CD4-positive, alpha-beta memory T cell (primary cell): ENCODE measurements at regions of chr1 and their contacts with region 1.

Region 1: GRCh38 chr1:21255278-21255942 is 34.9 kb downstream of the ECE1 start:
- DNase-seq: peak; percentile 73 to 82 (median 77)
- H3K4me3 ChIP-seq: no peak overlapping the region
- H3K4me3 Mint-ChIP-seq: no peak overlapping the region
- H3K27ac ChIP-seq: no peak overlapping the region
- H3K27ac Mint-ChIP-seq: peak overlapping the region in 5 of 7 donors; percentile 54 to 91 (median 70)
- H3K4me1 ChIP-seq: peaks cover 25% of the 10 kb centered on the region
- H3K4me1 Mint-ChIP-seq: peaks cover 20 to 40% (median 32%) of the 10 kb centered on the region in 4 donors
- H3K27me3 ChIP-seq: no peaks in the 10 kb centered on the region
- H3K27me3 Mint-ChIP-seq: no peaks in the 10 kb centered on the region

Region 2: GRCh38 chr1:20999525-21000244 is 255.7 kb before region 1 on chr1:
- CTCF ChIA-PET with region 1: no interaction called
- POLR2A ChIA-PET with region 1: no interaction called
- intact Hi-C with region 1: no loop called
- DNase-seq: no peak
- H3K4me3 ChIP-seq: no peak overlapping the region
- H3K4me3 Mint-ChIP-seq: no peak overlapping the region
- H3K27ac ChIP-seq: no peak overlapping the region
- H3K27ac Mint-ChIP-seq: no peak overlapping the region
- H3K4me1 ChIP-seq: no peaks in the 10 kb centered on the region
- H3K4me1 Mint-ChIP-seq: peaks cover 0 to 1% (median 0%) of the 10 kb centered on the region in 4 donors
- H3K27me3 ChIP-seq: no peaks in the 10 kb centered on the region
- H3K27me3 Mint-ChIP-seq: no peaks in the 10 kb centered on the region

Region 3: GRCh38 chr1:21176586-21177555 is 78.5 kb before region 1 on chr1 and contains the start of gene EIF4G3:
- CTCF ChIA-PET with region 1: no interaction called
- POLR2A ChIA-PET with region 1: no interaction called
- intact Hi-C with region 1: no loop called
- DNase-seq: peak; percentile 98 to 100 (median 98)
- H3K4me3 ChIP-seq: peak within 1 kb of the TSS; percentile 57 to 75
- H3K4me3 Mint-ChIP-seq: peak within 1 kb of the TSS; percentile 89 to 95 (median 91)
- H3K27ac ChIP-seq: peak within 1 kb of the TSS; percentile 69
- H3K27ac Mint-ChIP-seq: peak within 1 kb of the TSS; percentile 93 to 96 (median 95)
- H3K4me1 ChIP-seq: peaks cover 18% of the 10 kb centered on the region
- H3K4me1 Mint-ChIP-seq: peaks cover 18 to 26% (median 21%) of the 10 kb centered on the region in 4 donors
- H3K27me3 ChIP-seq: no peaks in the 10 kb centered on the region
- H3K27me3 Mint-ChIP-seq: no peaks in the 10 kb centered on the region
- total RNA-seq, gene EIF4G3: 16.6 to 18.0 TPM

Region 4: GRCh38 chr1:21232044-21232443 is 23.4 kb before region 1 on chr1:
- CTCF ChIA-PET with region 1: interaction called, 65 read pairs
- POLR2A ChIA-PET with region 1: no interaction called
- intact Hi-C with region 1: no loop called
- DNase-seq: peak in 4 of 5 donors; percentile 33 to 49 (median 39)
- H3K4me3 ChIP-seq: no peak overlapping the region
- H3K4me3 Mint-ChIP-seq: no peak overlapping the region
- H3K27ac ChIP-seq: no peak overlapping the region
- H3K27ac Mint-ChIP-seq: peak overlapping the region in 4 of 7 donors; percentile 6 to 77 (median 44)
- H3K4me1 ChIP-seq: no peaks in the 10 kb centered on the region
- H3K4me1 Mint-ChIP-seq: peaks cover 0 to 2% (median 0%) of the 10 kb centered on the region in 4 donors
- H3K27me3 ChIP-seq: no peaks in the 10 kb centered on the region
- H3K27me3 Mint-ChIP-seq: no peaks in the 10 kb centered on the region

Region 5: GRCh38 chr1:21270086-21270689 is 14.8 kb after region 1 on chr1:
- CTCF ChIA-PET with region 1: interaction called, 145 read pairs
- POLR2A ChIA-PET with region 1: interaction called, 7 read pairs
- intact Hi-C with region 1: no loop called
- DNase-seq: peak; percentile 73 to 82 (median 79)
- H3K4me3 ChIP-seq: no peak overlapping the region
- H3K4me3 Mint-ChIP-seq: peak overlapping the region in 1 of 8 donors; percentile 16
- H3K27ac ChIP-seq: no peak overlapping the region
- H3K27ac Mint-ChIP-seq: peak overlapping the region; percentile 28 to 80 (median 73)
- H3K4me1 ChIP-seq: peaks cover 18% of the 10 kb centered on the region
- H3K4me1 Mint-ChIP-seq: peaks cover 16 to 41% (median 29%) of the 10 kb centered on the region in 4 donors
- H3K27me3 ChIP-seq: no peaks in the 10 kb centered on the region
- H3K27me3 Mint-ChIP-seq: no peaks in the 10 kb centered on the region

Region 6: DNA sequence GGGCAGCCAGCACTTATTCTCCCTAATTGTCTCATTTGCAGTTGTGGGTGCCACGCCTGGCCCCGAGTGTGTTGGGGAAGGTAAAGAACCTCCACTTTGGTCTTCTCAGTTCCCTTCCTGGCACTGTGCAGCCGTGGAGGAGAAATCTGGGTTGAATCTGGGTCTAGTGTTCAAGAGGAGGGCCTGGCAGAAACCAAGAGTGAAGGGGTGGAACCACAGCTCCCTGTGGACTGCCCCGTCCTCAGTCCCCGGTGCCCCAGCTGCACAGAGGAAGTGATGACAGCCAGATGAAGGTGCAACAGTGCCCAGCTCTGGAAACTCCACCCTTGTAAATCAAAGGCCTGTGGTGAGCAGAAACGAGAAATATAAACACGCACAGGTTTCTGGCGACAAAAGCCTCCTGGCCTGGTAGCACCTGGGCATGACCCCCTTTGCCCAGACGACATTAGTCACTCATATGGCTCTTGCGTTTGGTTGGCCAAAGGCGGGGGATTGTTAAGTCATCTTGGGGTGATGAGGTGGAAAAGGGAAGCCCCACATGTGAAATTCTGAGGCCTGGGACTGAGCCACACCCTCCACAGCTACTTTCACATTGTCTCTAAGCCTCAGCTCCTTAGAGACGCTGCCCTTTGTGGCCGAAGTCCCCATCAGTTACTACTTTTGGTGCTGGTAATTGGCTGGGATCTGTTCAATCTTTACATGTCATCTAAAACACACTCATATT is 39.0 kb after region 1 on chr1:
- CTCF ChIA-PET with region 1: interaction called, 20 read pairs
- POLR2A ChIA-PET with region 1: interaction called, 19 read pairs
- intact Hi-C with region 1: loop called (anchors 5 kb)
- DNase-seq: peak; percentile 93 to 99 (median 97)
- H3K4me3 ChIP-seq: peak overlapping the region; percentile 79 to 81
- H3K4me3 Mint-ChIP-seq: peak overlapping the region; percentile 86 to 99 (median 94)
- H3K27ac ChIP-seq: peak overlapping the region; percentile 99
- H3K27ac Mint-ChIP-seq: peak overlapping the region; percentile 96 to 100 (median 99)
- H3K4me1 ChIP-seq: peaks cover 84% of the 10 kb centered on the region
- H3K4me1 Mint-ChIP-seq: peaks cover 42 to 95% (median 69%) of the 10 kb centered on the region in 4 donors
- H3K27me3 ChIP-seq: no peaks in the 10 kb centered on the region
- H3K27me3 Mint-ChIP-seq: no peaks in the 10 kb centered on the region

Region 7: DNA sequence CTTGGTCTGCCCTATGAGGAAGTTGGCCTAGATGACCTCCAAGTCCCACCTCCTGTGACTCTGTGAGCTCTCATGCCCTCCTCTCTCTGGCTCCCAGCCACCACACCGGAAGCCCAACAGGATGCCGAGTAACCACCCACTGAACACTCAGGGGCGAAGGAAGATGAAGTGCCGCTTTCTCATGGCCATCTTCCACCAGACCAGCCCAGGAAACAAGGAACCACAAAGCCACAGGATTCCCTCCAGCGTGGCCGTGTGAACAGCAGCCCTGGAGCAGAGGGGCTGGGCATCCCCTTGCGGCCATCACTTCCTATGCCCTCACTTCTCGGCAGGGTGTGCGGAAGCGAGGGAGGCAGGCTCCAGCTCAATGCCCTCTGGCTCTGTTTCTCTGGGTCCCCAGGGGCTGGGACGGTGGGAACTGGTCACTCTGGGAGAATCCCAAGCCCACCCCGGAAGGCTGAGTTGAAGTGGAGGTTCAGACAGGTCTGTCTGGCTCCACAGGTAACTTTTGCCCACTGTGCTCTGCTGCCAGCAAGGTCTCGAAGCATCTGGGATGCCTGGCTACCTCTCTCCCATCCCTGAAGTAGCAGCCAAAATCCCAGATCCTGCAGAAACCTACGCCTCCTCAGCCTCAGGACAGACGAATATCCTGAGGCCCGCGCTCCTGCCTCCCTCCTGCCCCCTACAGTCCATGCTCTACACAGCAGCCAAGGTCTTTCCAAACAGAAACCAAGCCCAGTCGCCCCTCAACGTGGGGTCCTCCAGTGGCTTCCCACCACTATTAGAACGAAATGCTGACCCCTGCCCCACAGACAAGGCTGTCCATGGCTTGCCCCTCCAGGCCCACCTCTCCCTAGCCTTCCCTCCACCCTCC is 79.0 kb after region 1 on chr1:
- CTCF ChIA-PET with region 1: interaction called, 17 read pairs
- POLR2A ChIA-PET with region 1: interaction called, 10 read pairs
- intact Hi-C with region 1: loop called (anchors 1 kb)
- DNase-seq: peak; percentile 87 to 93 (median 89)
- H3K4me3 ChIP-seq: peak overlapping the region; percentile 17 to 44
- H3K4me3 Mint-ChIP-seq: peak overlapping the region; percentile 80 to 94 (median 90)
- H3K27ac ChIP-seq: peak overlapping the region; percentile 82
- H3K27ac Mint-ChIP-seq: peak overlapping the region; percentile 92 to 99 (median 98)
- H3K4me1 ChIP-seq: peaks cover 94% of the 10 kb centered on the region
- H3K4me1 Mint-ChIP-seq: peaks cover 62 to 98% (median 81%) of the 10 kb centered on the region in 4 donors
- H3K27me3 ChIP-seq: no peaks in the 10 kb centered on the region
- H3K27me3 Mint-ChIP-seq: no peaks in the 10 kb centered on the region

Region 8: GRCh38 chr1:21355956-21356355 is 100.5 kb after region 1 on chr1:
- CTCF ChIA-PET with region 1: interaction called, 13 read pairs
- POLR2A ChIA-PET with region 1: no interaction called
- intact Hi-C with region 1: no loop called
- DNase-seq: no peak
- H3K4me3 ChIP-seq: no peak overlapping the region
- H3K4me3 Mint-ChIP-seq: no peak overlapping the region
- H3K27ac ChIP-seq: no peak overlapping the region
- H3K27ac Mint-ChIP-seq: peak overlapping the region in 1 of 7 donors; percentile 1
- H3K4me1 ChIP-seq: no peaks in the 10 kb centered on the region
- H3K4me1 Mint-ChIP-seq: peaks cover 0 to 4% (median under 1%) of the 10 kb centered on the region in 4 donors
- H3K27me3 ChIP-seq: no peaks in the 10 kb centered on the region
- H3K27me3 Mint-ChIP-seq: no peaks in the 10 kb centered on the region

Region 9: GRCh38 chr1:21659099-21659923 is 403.9 kb after region 1 on chr1:
- CTCF ChIA-PET with region 1: no interaction called
- POLR2A ChIA-PET with region 1: no interaction called
- intact Hi-C with region 1: loop called (anchors 1 kb)
- DNase-seq: peak; percentile 81 to 86 (median 83)
- H3K4me3 ChIP-seq: no peak overlapping the region
- H3K4me3 Mint-ChIP-seq: peak overlapping the region in 4 of 8 donors; percentile 31 to 65 (median 40)
- H3K27ac ChIP-seq: no peak overlapping the region
- H3K27ac Mint-ChIP-seq: peak overlapping the region in 2 of 7 donors; percentile 7 to 57
- H3K4me1 ChIP-seq: peaks cover 8% of the 10 kb centered on the region
- H3K4me1 Mint-ChIP-seq: peaks cover 0 to 7% (median 5%) of the 10 kb centered on the region in 4 donors
- H3K27me3 ChIP-seq: no peaks in the 10 kb centered on the region
- H3K27me3 Mint-ChIP-seq: peaks cover 9 to 15% of the 10 kb centered on the region in 2 donors

Region 10: DNA sequence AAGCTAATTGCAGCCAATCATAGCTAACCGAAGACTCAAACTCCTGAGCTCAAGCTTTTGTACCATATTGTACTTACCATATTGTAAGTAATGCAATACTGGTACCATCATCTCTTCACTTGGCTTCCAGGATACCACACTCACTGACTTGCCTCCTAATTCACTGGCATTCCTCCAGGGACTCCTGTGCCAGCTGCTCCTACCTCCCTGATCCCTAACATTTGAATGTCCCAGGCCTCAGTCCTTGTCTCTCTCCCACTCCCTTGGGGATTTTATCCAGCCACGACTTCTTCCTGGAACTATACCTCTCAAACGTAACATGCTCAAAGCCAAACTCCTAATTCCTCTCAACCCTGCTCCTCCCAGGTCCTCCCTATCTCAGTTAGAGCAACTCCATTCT is 493.7 kb after region 1 on chr1:
- CTCF ChIA-PET with region 1: no interaction called
- POLR2A ChIA-PET with region 1: no interaction called
- intact Hi-C with region 1: no loop called
- DNase-seq: no peak
- H3K4me3 ChIP-seq: no peak overlapping the region
- H3K4me3 Mint-ChIP-seq: no peak overlapping the region
- H3K27ac ChIP-seq: no peak overlapping the region
- H3K27ac Mint-ChIP-seq: peak overlapping the region in 3 of 7 donors; percentile 7 to 65 (median 50)
- H3K4me1 ChIP-seq: no peaks in the 10 kb centered on the region
- H3K4me1 Mint-ChIP-seq: peaks cover 0 to 7% (median 3%) of the 10 kb centered on the region in 4 donors
- H3K27me3 ChIP-seq: no peaks in the 10 kb centered on the region
- H3K27me3 Mint-ChIP-seq: no peaks in the 10 kb centered on the region